MCF 10A (cell line): ENCODE measurements at regions of chr1 and their contacts with region 1.

Region 1: GRCh38 chr1:36342481-36343478 is 19.3 kb upstream of the EVA1B start:
- DNase-seq: peak; percentile 74
- H3K4me3 Mint-ChIP-seq: no peak overlapping the region
- H3K27ac Mint-ChIP-seq: peak overlapping the region; percentile 19
- H3K4me1 Mint-ChIP-seq: peaks cover 8% of the 10 kb centered on the region
- H3K27me3 Mint-ChIP-seq: no peaks in the 10 kb centered on the region
- CTCF ChIP-seq: peak; percentile 78

Region 2: GRCh38 chr1:36306902-36307456 is 35.8 kb before region 1 on chr1:
- CTCF ChIA-PET with region 1: interaction called, 11 read pairs
- POLR2A ChIA-PET with region 1: interaction called, 3 read pairs
- intact Hi-C with region 1: no loop called
- DNase-seq: peak; percentile 93
- H3K4me3 Mint-ChIP-seq: peak overlapping the region; percentile 72
- H3K27ac Mint-ChIP-seq: no peak overlapping the region
- H3K4me1 Mint-ChIP-seq: peaks cover 6% of the 10 kb centered on the region
- H3K27me3 Mint-ChIP-seq: no peaks in the 10 kb centered on the region
- CTCF ChIP-seq: no peak

Region 3: DNA sequence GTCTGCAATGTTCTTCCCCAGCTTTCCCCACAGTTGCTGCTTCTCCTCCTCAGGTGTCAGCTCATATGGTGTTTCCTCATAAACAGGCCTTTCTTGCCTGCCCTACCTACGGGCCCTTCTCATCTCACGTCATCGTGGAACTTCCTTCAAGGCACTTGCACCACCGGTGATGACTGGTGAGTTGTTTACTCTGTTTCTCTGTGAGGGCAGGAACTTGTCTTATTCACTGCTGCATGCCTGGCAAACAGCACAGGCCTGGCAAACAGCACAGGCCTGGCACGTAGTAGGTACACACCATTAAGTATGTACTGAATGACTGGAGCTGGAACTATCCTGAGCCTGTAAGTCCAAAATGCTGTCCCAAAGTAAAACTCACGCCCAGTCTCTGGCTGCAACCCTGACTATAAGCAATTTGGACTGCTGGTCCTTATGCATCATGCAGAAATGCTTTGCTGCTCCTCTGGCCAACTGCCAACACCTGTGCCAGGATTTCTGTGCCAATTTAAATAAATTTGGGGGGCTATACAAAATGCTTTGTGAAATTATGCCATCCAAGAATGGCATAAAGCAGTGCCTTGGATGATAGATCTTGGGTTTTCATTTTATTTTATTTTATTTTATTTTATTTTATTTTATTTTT is 17.3 kb after region 1 on chr1:
- CTCF ChIA-PET with region 1: interaction called, 118 read pairs
- POLR2A ChIA-PET with region 1: no interaction called
- intact Hi-C with region 1: no loop called
- DNase-seq: peak; percentile 55
- H3K4me3 Mint-ChIP-seq: no peak overlapping the region
- H3K27ac Mint-ChIP-seq: peak overlapping the region; percentile 49
- H3K4me1 Mint-ChIP-seq: peaks cover 7% of the 10 kb centered on the region
- H3K27me3 Mint-ChIP-seq: no peaks in the 10 kb centered on the region
- CTCF ChIP-seq: no peak

Region 4: DNA sequence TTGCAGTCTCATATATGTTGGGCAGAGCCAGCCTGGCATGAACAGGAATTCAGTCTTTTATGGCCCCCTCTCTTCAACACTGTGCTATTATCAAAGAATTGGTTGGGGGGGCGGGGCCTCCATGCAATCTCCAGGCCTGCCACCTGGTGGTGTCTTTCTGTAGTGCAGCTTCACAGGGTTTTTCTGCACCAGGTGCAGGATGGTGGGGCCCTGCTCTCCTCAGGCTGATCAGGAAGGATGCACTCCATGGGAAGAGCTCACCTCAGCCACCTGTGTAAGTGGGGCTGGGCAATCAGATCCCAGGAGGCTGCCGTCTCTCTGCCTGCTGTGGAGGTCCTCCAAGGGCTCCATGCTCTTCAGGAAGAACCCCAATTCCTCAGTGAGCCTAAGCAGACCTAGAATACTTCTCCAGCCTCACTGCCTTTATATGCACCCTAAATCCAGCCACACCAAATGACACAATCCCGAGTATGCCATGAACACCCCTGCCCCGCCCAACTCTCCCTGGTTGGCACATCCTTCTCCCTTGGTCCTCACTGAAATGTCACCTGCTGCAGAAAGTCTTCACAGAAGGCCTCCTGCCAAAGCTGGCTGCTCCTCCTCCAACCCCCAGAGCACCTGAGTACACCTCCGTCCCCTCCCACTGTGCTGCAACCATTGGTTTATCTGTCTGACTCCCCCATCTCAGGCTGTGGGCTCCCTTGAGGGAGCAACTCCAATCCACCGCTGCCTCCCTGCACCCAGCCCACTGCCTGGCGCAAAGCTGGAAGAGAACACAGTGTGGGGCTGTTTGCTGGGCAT is 26.5 kb after region 1 on chr1:
- CTCF ChIA-PET with region 1: interaction called, 118 read pairs
- POLR2A ChIA-PET with region 1: interaction called, 5 read pairs
- intact Hi-C with region 1: loop called (anchors 1 kb)
- DNase-seq: peak; percentile 76
- H3K4me3 Mint-ChIP-seq: no peak overlapping the region
- H3K27ac Mint-ChIP-seq: peak overlapping the region; percentile 37
- H3K4me1 Mint-ChIP-seq: peaks cover 33% of the 10 kb centered on the region
- H3K27me3 Mint-ChIP-seq: no peaks in the 10 kb centered on the region
- CTCF ChIP-seq: peak; percentile 84

Region 5: DNA sequence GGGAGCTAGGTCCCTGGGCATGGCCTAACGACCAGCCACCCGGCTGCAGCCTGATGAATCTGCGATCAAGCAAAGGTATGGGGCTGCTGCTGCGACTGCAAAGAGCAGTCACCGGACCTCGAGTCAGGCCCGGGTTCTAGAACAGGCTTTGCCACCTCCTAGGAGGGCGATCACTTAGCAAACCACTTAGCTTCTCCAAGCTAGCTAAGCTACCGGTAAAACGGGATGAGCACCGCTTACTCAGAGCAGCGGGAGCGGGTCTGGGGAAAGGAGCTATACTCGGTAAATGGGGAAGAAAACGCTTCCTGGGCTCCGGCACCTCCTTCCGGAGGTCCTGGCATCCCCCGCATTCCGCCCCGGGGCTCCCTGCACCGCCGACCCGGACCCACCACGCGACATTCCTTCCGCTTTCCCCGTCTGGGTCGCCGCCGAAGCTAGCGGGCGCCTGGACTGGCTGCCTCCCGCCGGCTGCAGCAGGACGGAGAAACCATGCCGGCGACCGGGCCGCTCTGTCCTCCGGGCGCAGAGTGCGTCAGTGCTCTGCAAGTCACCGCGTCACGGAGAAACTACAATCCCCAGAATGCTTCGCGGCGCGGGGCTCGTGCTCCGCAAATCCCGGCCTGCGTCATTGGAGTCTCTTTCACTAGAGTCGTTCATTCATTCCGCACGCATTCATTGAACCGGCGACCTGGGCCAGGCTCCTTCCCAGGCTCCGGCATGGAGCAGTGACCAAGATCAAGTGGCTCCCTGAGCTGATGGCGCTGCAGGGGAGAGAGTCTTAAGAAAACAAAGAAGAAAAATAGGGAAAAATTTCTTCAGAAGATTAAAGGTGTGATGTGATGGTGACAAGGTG is 54.8 kb after region 1 on chr1 and contains the start of gene LSM10:
- CTCF ChIA-PET with region 1: interaction called, 10 read pairs
- POLR2A ChIA-PET with region 1: interaction called, 3 read pairs
- intact Hi-C with region 1: no loop called
- DNase-seq: peak; percentile 93
- H3K4me3 Mint-ChIP-seq: peak within 1 kb of the TSS; percentile 90
- H3K27ac Mint-ChIP-seq: peak within 1 kb of the TSS; percentile 87
- H3K4me1 Mint-ChIP-seq: peaks cover 7% of the 10 kb centered on the region
- H3K27me3 Mint-ChIP-seq: no peaks in the 10 kb centered on the region
- CTCF ChIP-seq: no peak
- total RNA-seq, gene LSM10: 42.3 and 49.8 TPM in 2 replicates

Region 6: GRCh38 chr1:36415626-36416326 is 73.0 kb after region 1 on chr1:
- CTCF ChIA-PET with region 1: interaction called, 36 read pairs
- POLR2A ChIA-PET with region 1: no interaction called
- intact Hi-C with region 1: no loop called
- DNase-seq: no peak
- H3K4me3 Mint-ChIP-seq: no peak overlapping the region
- H3K27ac Mint-ChIP-seq: no peak overlapping the region
- H3K4me1 Mint-ChIP-seq: peaks cover 4% of the 10 kb centered on the region
- H3K27me3 Mint-ChIP-seq: no peaks in the 10 kb centered on the region
- CTCF ChIP-seq: no peak

Region 7: DNA sequence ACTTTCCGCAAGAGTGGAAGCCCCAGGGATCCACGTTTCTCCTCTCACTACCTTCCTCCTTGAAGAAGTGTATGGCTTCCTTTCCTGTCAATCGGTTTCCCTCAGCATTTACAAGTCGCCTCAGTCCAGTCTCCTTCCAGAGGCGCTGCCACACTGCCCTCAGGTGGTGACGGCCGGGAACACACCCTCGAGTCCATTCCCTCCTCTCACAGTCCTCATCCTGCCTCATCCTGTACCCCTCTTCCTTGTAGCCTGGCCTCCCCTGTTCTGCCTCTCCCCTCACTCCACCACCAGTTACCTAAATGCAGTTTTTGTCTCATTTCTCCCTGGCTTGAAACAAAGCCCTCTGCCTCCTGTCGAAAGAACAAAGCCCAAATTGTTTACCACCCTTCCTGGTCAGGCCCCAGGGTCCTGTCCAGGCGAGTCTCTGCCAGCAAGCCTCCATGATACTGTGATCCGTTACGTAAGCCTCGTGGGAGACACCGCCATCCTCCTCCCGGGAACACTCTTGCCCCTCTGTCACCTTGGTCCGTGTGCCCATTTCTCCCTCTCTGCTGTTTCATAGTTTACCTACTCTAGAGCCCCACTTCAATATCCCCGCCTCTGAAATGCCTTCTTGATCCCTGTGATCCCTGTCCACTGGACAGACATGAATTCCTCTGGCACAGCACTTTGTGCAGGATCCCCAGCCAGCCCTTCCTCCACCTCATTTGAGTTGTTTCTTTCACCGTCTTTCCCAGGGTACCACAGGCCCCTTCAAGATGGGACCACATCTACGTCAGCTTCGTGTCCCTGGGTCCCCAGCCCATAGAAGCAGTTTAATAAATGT is 78.3 kb after region 1 on chr1:
- CTCF ChIA-PET with region 1: interaction called, 36 read pairs
- POLR2A ChIA-PET with region 1: no interaction called
- intact Hi-C with region 1: loop called (anchors 1 kb)
- DNase-seq: peak; percentile 83
- H3K4me3 Mint-ChIP-seq: no peak overlapping the region
- H3K27ac Mint-ChIP-seq: peak overlapping the region; percentile 76
- H3K4me1 Mint-ChIP-seq: peaks cover 14% of the 10 kb centered on the region
- H3K27me3 Mint-ChIP-seq: no peaks in the 10 kb centered on the region
- CTCF ChIP-seq: peak; percentile 96